Endothelial cell of umbilical vein (primary cell): ENCODE measurements at regions of chr18 and their contacts with region 1.

Region 1: DNA sequence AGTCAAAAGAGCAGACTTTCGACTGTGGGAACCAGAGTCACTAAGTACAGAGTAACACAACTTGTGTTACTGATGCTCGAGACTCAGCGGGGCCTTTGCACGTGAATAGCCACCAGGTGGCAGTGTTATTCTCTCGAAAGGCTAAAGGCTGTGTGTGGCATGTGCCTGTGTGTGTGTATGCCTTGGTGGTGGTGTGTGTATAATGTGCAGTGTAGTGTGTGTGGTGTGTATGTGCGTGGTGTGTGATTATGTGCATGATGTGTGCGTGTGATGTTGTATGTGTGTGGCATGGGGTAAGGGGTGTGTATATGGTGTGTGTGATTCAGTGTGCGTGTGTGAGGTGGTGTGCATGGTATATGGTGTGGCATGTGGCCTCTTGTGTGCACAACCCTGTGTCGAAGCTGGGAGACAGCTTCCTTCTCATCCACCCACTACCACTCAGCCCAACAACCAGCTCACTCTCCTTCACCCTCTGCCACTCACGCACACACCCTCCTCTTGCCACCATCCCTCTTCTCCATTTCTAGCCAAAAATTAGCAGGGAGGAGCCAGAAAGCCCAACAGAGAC is 83.0 kb upstream of the ZNF532 start:
- DNase-seq: peak; percentile 83
- H3K4me3 ChIP-seq: no peak overlapping the region
- H3K27ac ChIP-seq: no peak overlapping the region
- H3K4me1 ChIP-seq: peaks cover 19% of the 10 kb centered on the region
- H3K27me3 ChIP-seq: no peaks in the 10 kb centered on the region
- CTCF ChIP-seq: peak; percentile 76 to 80
- POLR2A ChIP-seq: no peak

Region 2: DNA sequence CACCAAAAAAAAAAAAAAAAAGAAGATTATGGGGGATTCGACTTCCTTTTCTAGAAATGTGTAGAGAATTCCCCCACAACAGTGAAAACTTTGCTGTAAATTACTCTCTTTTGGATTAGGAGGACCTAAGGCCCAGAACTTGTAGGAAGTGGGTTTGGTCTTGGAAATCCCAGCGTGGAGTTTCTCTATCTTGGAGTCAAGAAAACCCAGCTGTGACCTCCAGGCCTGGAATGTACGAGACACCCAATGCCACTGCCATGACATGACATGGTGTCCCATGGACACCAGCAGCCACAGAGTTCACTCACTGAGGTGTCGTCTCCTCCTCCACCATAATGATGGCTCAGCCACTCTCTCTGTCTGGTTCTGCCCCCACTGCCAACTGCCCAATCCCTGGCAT is 355.1 kb before region 1 on chr18:
- CTCF ChIA-PET with region 1: no interaction called
- POLR2A ChIA-PET with region 1: no interaction called
- dilution Hi-C with region 1: no loop called
- intact Hi-C with region 1: no loop called
- DNase-seq: no peak
- H3K4me3 ChIP-seq: no peak overlapping the region
- H3K27ac ChIP-seq: no peak overlapping the region
- H3K4me1 ChIP-seq: no peaks in the 10 kb centered on the region
- H3K27me3 ChIP-seq: no peaks in the 10 kb centered on the region
- CTCF ChIP-seq: no peak
- POLR2A ChIP-seq: no peak

Region 3: DNA sequence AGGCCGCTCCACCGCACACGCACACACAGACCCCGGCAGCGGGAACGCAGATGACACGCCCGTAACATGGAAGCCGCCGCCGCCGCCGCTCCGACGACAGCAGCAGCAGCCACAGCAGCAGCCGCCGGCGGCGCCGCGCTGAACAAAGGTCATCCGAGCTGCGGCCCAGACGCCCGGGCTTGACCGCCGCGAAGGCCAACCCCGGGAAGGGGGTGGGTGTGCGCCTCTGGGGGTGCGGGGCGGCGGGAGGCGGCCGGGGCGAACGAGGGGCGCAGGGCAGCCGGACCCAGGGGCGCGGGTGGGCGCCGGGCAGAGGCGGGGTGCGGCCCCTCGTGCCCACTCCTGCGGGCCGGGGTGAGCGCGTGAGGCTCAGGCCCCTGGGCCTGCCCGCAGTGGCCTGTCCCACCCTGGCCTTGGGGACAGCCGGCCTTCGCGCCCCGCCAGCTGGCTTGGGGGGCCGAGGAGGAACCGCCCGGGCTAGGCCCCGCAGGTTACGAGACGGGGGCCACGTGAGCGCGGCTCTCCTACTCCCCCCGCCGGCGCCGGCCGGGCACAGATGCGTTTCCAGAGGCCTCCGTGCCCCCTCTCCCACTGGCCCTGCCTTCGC is 81.9 kb after region 1 on chr18:
- CTCF ChIA-PET with region 1: interaction called, 7 read pairs
- POLR2A ChIA-PET with region 1: no interaction called
- dilution Hi-C with region 1: no loop called
- intact Hi-C with region 1: loop called (anchors 1 kb)
- DNase-seq: peak; percentile 31
- H3K4me3 ChIP-seq: peak overlapping the region in 1 of 3 experiments; percentile 39
- H3K27ac ChIP-seq: peak overlapping the region; percentile 77
- H3K4me1 ChIP-seq: peaks cover 38% of the 10 kb centered on the region
- H3K27me3 ChIP-seq: no peaks in the 10 kb centered on the region
- CTCF ChIP-seq: peak in 1 of 2 donors; percentile 27
- POLR2A ChIP-seq: no peak

Region 4: DNA sequence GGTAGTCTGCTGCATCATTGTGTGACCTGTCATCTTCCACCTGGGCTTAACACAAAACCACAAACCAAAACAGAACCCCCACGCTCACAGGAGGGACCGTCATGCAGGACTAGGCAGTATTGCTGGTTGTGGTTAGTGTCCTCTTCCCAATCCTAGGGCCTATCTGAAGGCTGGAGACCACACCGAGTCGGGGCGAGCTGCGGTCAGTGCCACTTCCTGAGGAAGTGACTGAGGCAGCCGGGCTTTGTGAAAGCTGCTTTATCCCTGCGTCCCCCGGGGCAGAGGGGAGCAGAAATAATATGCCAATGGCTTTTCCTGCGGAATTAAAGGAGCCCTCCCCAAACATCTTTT is 105.9 kb after region 1 on chr18:
- CTCF ChIA-PET with region 1: interaction called, 3 read pairs
- POLR2A ChIA-PET with region 1: no interaction called
- dilution Hi-C with region 1: no loop called
- intact Hi-C with region 1: loop called (anchors 1 kb)
- DNase-seq: peak; percentile 78
- H3K4me3 ChIP-seq: no peak overlapping the region
- H3K27ac ChIP-seq: peak overlapping the region; percentile 43
- H3K4me1 ChIP-seq: peaks cover 18% of the 10 kb centered on the region
- H3K27me3 ChIP-seq: no peaks in the 10 kb centered on the region
- CTCF ChIP-seq: no peak
- POLR2A ChIP-seq: peak; percentile 42

Region 5: GRCh38 chr18:58911766-58912165 is 130.1 kb after region 1 on chr18:
- CTCF ChIA-PET with region 1: no interaction called
- POLR2A ChIA-PET with region 1: no interaction called
- dilution Hi-C with region 1: no loop called
- intact Hi-C with region 1: loop called (anchors 1 kb)
- DNase-seq: peak; percentile 62
- H3K4me3 ChIP-seq: no peak overlapping the region
- H3K27ac ChIP-seq: no peak overlapping the region
- H3K4me1 ChIP-seq: peaks cover 32% of the 10 kb centered on the region
- H3K27me3 ChIP-seq: no peaks in the 10 kb centered on the region
- CTCF ChIP-seq: no peak
- POLR2A ChIP-seq: no peak

Region 6: GRCh38 chr18:58937071-58937886 is 155.6 kb after region 1 on chr18:
- CTCF ChIA-PET with region 1: no interaction called
- POLR2A ChIA-PET with region 1: no interaction called
- dilution Hi-C with region 1: no loop called
- intact Hi-C with region 1: loop called (anchors 1 kb)
- DNase-seq: peak; percentile 87
- H3K4me3 ChIP-seq: peak overlapping the region in 1 of 3 experiments; percentile 34
- H3K27ac ChIP-seq: peak overlapping the region; percentile 60
- H3K4me1 ChIP-seq: peaks cover 18% of the 10 kb centered on the region
- H3K27me3 ChIP-seq: no peaks in the 10 kb centered on the region
- CTCF ChIP-seq: no peak
- POLR2A ChIP-seq: no peak

Region 7: DNA sequence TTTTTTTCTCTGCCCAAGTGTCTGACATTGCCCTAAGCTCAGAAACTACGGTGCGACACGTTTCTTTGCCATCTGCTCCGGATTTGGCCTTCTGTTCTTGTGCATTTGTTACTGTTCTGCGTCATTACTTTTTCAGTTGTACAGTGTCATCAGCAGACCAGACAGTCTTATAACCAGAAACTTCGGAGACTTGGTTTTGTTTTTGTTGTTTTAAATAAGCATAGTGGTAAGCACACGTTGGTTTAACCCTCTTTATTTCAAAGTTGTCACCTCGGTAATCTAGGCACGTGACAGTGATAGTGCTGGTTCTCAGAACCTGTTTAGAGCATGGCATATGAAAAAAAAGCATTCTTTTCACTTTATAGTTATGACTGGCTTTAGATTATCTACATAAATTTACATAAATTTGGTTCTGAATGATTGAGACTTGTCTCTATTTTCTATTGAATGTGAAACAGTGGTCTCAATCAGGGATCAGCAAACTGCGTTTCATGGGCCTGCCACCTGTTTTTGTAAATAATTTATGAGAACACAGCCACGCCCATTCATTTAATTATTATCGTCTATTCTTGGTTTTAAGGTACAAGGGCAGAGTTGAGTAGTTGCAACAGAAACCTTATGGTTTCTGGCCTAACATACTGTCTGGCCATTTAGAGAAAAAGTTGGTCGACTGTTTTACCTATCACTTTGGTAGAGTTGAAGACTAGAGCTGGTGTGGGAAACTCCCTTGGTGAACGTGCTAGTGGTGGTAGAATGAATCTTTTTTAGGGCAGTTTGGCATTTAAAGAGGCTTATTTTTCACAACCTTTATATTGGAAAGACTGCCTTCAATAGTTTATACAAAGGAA is 189.5 kb after region 1 on chr18:
- CTCF ChIA-PET with region 1: no interaction called
- POLR2A ChIA-PET with region 1: no interaction called
- dilution Hi-C with region 1: no loop called
- intact Hi-C with region 1: no loop called
- DNase-seq: no peak
- H3K4me3 ChIP-seq: no peak overlapping the region
- H3K27ac ChIP-seq: no peak overlapping the region
- H3K4me1 ChIP-seq: no peaks in the 10 kb centered on the region
- H3K27me3 ChIP-seq: no peaks in the 10 kb centered on the region
- CTCF ChIP-seq: no peak
- POLR2A ChIP-seq: no peak

Region 8: GRCh38 chr18:59056706-59057492 is 275.2 kb after region 1 on chr18:
- CTCF ChIA-PET with region 1: interaction called, 994 read pairs
- POLR2A ChIA-PET with region 1: no interaction called
- dilution Hi-C with region 1: loop called (anchors 25 kb)
- intact Hi-C with region 1: loop called (anchors 1 kb)
- DNase-seq: peak; percentile 76
- H3K4me3 ChIP-seq: no peak overlapping the region
- H3K27ac ChIP-seq: no peak overlapping the region
- H3K4me1 ChIP-seq: no peaks in the 10 kb centered on the region
- H3K27me3 ChIP-seq: peaks cover 0 to 3% of the 10 kb centered on the region in 2 experiments
- CTCF ChIP-seq: peak; percentile 77 to 87
- POLR2A ChIP-seq: no peak

Region 9: GRCh38 chr18:59070181-59070912 is 288.6 kb after region 1 on chr18:
- CTCF ChIA-PET with region 1: interaction called, 994 read pairs
- POLR2A ChIA-PET with region 1: no interaction called
- dilution Hi-C with region 1: loop called (anchors 25 kb)
- intact Hi-C with region 1: loop called (anchors 1 kb)
- DNase-seq: peak; percentile 78
- H3K4me3 ChIP-seq: no peak overlapping the region
- H3K27ac ChIP-seq: no peak overlapping the region
- H3K4me1 ChIP-seq: no peaks in the 10 kb centered on the region
- H3K27me3 ChIP-seq: peaks cover 2 to 3% of the 10 kb centered on the region in 2 experiments
- CTCF ChIP-seq: peak; percentile 90
- POLR2A ChIP-seq: no peak